ENCODE measurements at regions of chr18 and their contacts with region 1.

Region 1: GRCh38 chr18:70288851-70289328 is at the start of gene SOCS6:
- DNase-seq: peak; percentile 69 to 83 (median 75)
- ATAC-seq: peak; percentile 64
- H3K4me3 ChIP-seq: peak within 1 kb of the TSS; percentile 63
- H3K4me1 ChIP-seq: peaks cover 28% of the 10 kb centered on the region
- CTCF ChIP-seq: no peak
- total RNA-seq, gene SOCS6: 37.2 to 49.6 (median 39.7) TPM

Region 2: DNA sequence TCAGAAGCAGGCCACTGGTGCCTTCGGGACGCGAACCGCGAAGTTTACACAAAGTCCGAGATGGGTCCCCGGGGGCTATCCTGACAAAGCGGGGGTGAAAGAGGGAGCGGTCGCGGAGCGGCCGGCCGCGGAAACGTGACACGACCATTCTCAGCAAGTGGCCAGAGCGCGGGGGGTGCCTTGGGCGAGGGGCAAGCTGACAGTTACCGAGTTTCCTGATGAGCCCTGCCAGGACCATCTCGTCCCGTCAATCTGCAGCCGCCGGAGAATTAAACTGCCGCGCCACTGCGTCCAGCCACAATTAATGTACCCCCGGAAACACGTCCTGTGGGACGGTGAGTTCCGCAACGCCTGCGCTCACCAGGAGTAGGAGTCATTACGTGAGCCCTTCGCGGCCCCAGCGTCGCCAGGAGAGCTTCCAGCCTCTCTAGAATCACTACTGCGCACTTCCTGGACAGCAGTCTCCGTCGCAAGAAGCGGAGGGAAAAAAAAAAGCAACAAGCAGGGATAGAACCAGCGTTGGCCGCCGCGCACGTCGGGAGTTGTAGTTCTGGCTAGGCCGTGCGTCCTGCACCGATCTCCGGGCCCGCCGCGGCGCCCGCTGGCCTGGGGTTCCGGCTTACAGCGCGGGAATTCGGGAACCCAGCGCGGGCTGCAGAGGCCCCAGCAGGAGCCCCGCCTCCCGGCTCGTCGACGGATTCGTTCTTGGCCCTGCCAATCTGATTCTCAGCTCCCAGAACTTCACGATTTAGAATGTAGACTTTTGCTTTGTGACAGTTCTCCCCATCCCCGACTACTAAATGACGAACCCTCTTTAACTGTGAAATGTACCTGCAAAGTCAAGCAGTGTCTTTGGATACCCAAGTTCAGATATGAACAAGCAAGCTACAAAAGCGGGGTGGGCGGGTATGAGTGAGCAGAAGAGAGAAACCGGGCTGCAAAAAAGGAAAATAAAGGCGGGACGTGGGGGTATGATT is 83.2 kb before region 1 on chr18 and contains the start of gene RTTN:
- intact Hi-C with region 1: loop called (anchors 10 kb)
- DNase-seq: peak; percentile 95 to 97 (median 96)
- ATAC-seq: peak; percentile 99
- H3K4me3 ChIP-seq: peak within 1 kb of the TSS; percentile 33
- H3K4me1 ChIP-seq: peaks cover 8% of the 10 kb centered on the region
- CTCF ChIP-seq: no peak
- total RNA-seq, gene RTTN: 13.0 to 15.3 (median 15.2) TPM

Region 3: DNA sequence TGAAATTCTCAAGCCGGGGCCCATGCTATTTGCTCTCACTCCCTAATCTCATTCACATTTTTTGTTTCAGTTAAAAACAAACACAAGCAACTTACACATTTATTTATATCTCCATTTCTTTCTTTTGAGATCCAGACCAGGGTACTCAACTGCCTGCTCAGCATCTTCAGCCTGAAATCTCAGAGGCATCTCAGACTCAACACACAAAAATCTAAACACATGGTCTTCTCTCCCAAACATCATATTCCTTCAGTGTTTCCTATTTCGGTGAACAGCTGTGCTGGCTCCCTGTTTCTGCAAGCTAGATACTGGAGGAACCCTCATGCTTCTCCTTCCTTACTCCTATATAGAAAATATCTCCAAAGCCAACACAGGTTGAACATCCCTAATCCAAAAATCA is 72.1 kb before region 1 on chr18:
- intact Hi-C with region 1: loop called in 1 of 2 experiments (anchors 10 kb)
- DNase-seq: no peak
- ATAC-seq: no peak
- H3K4me3 ChIP-seq: no peak overlapping the region
- H3K4me1 ChIP-seq: no peaks in the 10 kb centered on the region
- CTCF ChIP-seq: no peak

Measured in mucosa of descending colon (tissue), 3 donors.